MCF 10A (cell line): ENCODE measurements at regions of chr4 and their contacts with region 1.

Region 1: GRCh38 chr4:183098723-183099536 is at the start of gene WWC2:
- DNase-seq: peak; percentile 92
- H3K4me3 Mint-ChIP-seq: peak within 1 kb of the TSS; percentile 78
- H3K27ac Mint-ChIP-seq: peak within 1 kb of the TSS; percentile 76
- H3K4me1 Mint-ChIP-seq: peaks cover 17% of the 10 kb centered on the region
- H3K27me3 Mint-ChIP-seq: no peaks in the 10 kb centered on the region
- CTCF ChIP-seq: no peak
- total RNA-seq, gene WWC2: 38.6 and 42.4 TPM in 2 replicates

Region 2: GRCh38 chr4:183130328-183131173 is 31.6 kb after region 1 on chr4:
- CTCF ChIA-PET with region 1: interaction called, 4 read pairs
- POLR2A ChIA-PET with region 1: interaction called, 30 read pairs
- intact Hi-C with region 1: no loop called
- DNase-seq: peak; percentile 87
- H3K4me3 Mint-ChIP-seq: peak overlapping the region; percentile 33
- H3K27ac Mint-ChIP-seq: peak overlapping the region; percentile 33
- H3K4me1 Mint-ChIP-seq: peaks cover 47% of the 10 kb centered on the region
- H3K27me3 Mint-ChIP-seq: no peaks in the 10 kb centered on the region
- CTCF ChIP-seq: no peak

Region 3: GRCh38 chr4:183136855-183137254 is 37.9 kb after region 1 on chr4:
- CTCF ChIA-PET with region 1: interaction called, 6 read pairs
- POLR2A ChIA-PET with region 1: interaction called, 112 read pairs
- intact Hi-C with region 1: loop called (anchors 2 kb)
- DNase-seq: no peak
- H3K4me3 Mint-ChIP-seq: no peak overlapping the region
- H3K27ac Mint-ChIP-seq: no peak overlapping the region
- H3K4me1 Mint-ChIP-seq: peaks cover 33% of the 10 kb centered on the region
- H3K27me3 Mint-ChIP-seq: no peaks in the 10 kb centered on the region
- CTCF ChIP-seq: no peak

Region 4: DNA sequence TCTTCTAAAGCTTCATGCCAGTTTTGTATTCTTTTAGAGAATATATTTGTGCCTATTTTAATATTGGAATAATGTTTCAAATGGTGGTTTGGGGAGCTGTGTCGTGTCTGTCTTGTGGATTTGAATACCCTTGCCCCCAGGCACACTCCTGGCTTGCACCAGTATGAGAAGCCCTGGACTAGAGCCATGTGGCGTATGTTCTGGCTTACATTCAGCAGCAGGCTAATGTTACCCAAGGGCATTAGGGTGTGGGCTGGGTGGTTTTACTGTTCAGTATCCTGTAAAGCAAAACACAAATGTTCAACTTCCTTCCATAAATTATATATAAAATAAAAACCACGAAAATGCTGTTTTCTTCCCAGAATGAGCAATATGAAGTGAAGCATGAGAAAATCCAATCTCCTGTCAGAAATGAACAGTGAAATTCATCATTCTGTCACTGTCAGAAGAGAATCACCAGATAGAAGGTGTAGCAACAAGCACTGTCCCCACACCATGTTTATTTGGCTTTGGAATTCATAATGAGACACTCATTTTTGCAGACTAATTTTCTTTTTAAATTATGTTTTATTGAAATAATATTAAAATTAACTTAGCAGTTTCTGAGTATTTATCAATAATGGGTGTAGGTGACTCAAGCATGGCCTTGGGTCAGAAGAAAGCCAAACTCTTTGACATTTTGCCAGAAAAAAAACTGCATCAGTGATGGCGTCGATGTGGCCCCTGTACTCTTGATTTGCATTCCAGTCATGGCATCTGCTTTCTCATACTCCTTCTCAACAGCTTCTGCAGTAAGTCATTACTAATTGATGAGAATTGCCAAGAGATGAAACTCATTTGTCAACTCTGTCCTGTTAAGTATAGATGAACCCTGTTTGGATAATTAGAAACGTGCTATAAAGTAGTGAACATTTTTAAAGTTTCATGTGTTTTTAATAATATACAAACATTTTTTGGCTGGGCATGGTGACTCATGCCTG is 43.9 kb after region 1 on chr4:
- CTCF ChIA-PET with region 1: interaction called, 6 read pairs
- POLR2A ChIA-PET with region 1: interaction called, 112 read pairs
- intact Hi-C with region 1: loop called (anchors 2 kb)
- DNase-seq: peak; percentile 95
- H3K4me3 Mint-ChIP-seq: peak overlapping the region; percentile 42
- H3K27ac Mint-ChIP-seq: peak overlapping the region; percentile 69
- H3K4me1 Mint-ChIP-seq: peaks cover 36% of the 10 kb centered on the region
- H3K27me3 Mint-ChIP-seq: no peaks in the 10 kb centered on the region
- CTCF ChIP-seq: no peak

Region 5: GRCh38 chr4:183249857-183250256 is 150.9 kb after region 1 on chr4:
- CTCF ChIA-PET with region 1: interaction called, 46 read pairs
- POLR2A ChIA-PET with region 1: interaction called, 19 read pairs
- intact Hi-C with region 1: loop called (anchors 1 kb)
- DNase-seq: peak; percentile 54
- H3K4me3 Mint-ChIP-seq: no peak overlapping the region
- H3K27ac Mint-ChIP-seq: no peak overlapping the region
- H3K4me1 Mint-ChIP-seq: no peaks in the 10 kb centered on the region
- H3K27me3 Mint-ChIP-seq: no peaks in the 10 kb centered on the region
- CTCF ChIP-seq: peak; percentile 43

Region 6: GRCh38 chr4:183256756-183257385 is 157.9 kb after region 1 on chr4:
- CTCF ChIA-PET with region 1: interaction called, 11 read pairs
- POLR2A ChIA-PET with region 1: interaction called, 5 read pairs
- intact Hi-C with region 1: loop called (anchors 1 kb)
- DNase-seq: peak; percentile 52
- H3K4me3 Mint-ChIP-seq: no peak overlapping the region
- H3K27ac Mint-ChIP-seq: no peak overlapping the region
- H3K4me1 Mint-ChIP-seq: no peaks in the 10 kb centered on the region
- H3K27me3 Mint-ChIP-seq: no peaks in the 10 kb centered on the region
- CTCF ChIP-seq: peak; percentile 73